Activated T-helper 2 cell treated with anti-CD3 and anti-CD28 coated beads, Interferon-gamma antibody, Interleukin-2, Interleukin-4, amounts not matched to agents 10 μg/mL and 5 μg/mL and 100 μg/mL, durations not matched to agents 14 hours and 24 hours and 36 hours (primary cell): ENCODE measurements at regions of chr1 and their contacts with region 1.

Region 1: GRCh38 chr1:112955781-112956543 is at the start of gene SLC16A1:
- DNase-seq: peak; percentile 88
- H3K4me3 Mint-ChIP-seq: peak within 1 kb of the TSS; percentile 100
- H3K27ac Mint-ChIP-seq: peak within 1 kb of the TSS; percentile 100
- H3K4me1 Mint-ChIP-seq: peaks cover 56% of the 10 kb centered on the region
- H3K27me3 Mint-ChIP-seq: no peaks in the 10 kb centered on the region
- total RNA-seq, gene SLC16A1: 75.8 and 77.1 TPM in 2 replicates

Region 2: GRCh38 chr1:112904071-112904830 is 51.7 kb before region 1 on chr1:
- intact Hi-C with region 1: loop called (anchors 1 kb)
- DNase-seq: peak; percentile 50
- H3K4me3 Mint-ChIP-seq: no peak overlapping the region
- H3K27ac Mint-ChIP-seq: peak overlapping the region; percentile 85
- H3K4me1 Mint-ChIP-seq: peaks cover 34% of the 10 kb centered on the region
- H3K27me3 Mint-ChIP-seq: no peaks in the 10 kb centered on the region

Region 3: DNA sequence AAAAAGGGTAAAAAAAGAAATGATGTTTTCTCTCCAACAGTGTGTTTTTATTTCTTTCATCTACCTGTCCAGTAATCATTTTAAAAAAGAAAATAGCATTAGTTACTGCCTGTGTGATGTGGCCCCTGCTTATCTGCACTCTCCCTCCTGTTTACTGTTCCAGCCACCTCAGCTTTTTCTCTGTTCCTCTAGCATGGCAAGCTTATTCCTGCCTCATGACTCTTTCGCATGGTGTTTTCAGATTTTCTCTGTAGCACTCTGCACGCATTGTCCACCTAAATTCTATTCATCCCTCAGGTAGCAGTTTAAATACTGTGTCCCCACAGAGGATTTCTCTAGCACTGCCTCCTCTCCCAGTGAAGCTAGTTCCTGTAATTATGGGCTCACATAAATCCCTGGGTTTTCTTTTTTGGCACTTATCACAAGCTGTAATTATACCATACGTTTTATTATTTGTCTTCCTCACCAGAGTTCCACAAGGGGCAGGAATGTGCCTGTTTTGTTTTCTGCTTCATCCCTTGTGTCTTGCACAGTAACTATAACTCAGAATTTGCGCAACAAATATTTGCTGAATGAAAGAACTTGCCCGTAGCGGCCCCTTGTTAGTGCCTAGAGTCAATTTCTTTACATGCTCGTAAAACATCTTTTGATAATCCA is 65.6 kb after region 1 on chr1:
- intact Hi-C with region 1: no loop called
- DNase-seq: no peak
- H3K4me3 Mint-ChIP-seq: no peak overlapping the region
- H3K27ac Mint-ChIP-seq: no peak overlapping the region
- H3K4me1 Mint-ChIP-seq: no peaks in the 10 kb centered on the region
- H3K27me3 Mint-ChIP-seq: no peaks in the 10 kb centered on the region